ENCODE measurements at regions of chr21 and their contacts with region 1.

Region 1: DNA sequence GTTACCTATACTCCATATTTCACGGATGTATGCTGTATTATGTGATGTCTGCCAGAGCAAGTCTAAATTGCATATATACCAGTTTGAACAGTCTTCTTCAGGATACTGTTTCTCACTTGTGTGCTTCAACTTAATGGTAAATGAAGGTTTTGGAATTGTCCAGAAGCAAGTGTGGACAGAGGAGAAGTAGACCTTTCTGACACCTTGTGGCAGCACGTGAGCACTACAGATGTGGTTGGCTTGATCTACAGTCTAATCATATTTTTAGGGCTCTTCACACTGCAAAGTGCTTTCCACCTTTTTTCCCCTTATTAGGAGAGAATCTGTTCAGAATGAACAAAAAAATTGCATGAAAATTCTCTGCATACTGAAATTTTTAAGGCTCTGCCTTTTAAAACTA is 10.9 kb downstream of the MORC3 start:
- DNase-seq: no peak
- ATAC-seq: peak; percentile 91
- H3K4me3 Mint-ChIP-seq: no peak overlapping the region
- H3K27ac Mint-ChIP-seq: peak overlapping the region; percentile 79
- H3K4me1 Mint-ChIP-seq: peaks cover 36% of the 10 kb centered on the region
- H3K27me3 Mint-ChIP-seq: no peaks in the 10 kb centered on the region
- CTCF ChIP-seq: peak; percentile 67

Region 2: GRCh38 chr21:36141513-36141925 is 189.4 kb before region 1 on chr21:
- CTCF ChIA-PET with region 1: interaction called, 14 read pairs
- POLR2A ChIA-PET with region 1: no interaction called
- intact Hi-C with region 1: loop called (anchors 1 kb)
- DNase-seq: peak; percentile 49
- ATAC-seq: peak; percentile 88
- H3K4me3 Mint-ChIP-seq: no peak overlapping the region
- H3K27ac Mint-ChIP-seq: no peak overlapping the region
- H3K4me1 Mint-ChIP-seq: peaks cover 23% of the 10 kb centered on the region
- H3K27me3 Mint-ChIP-seq: no peaks in the 10 kb centered on the region
- CTCF ChIP-seq: peak; percentile 74

Region 3: GRCh38 chr21:36235058-36235582 is 95.8 kb before region 1 on chr21:
- CTCF ChIA-PET with region 1: interaction called, 5 read pairs
- POLR2A ChIA-PET with region 1: no interaction called
- intact Hi-C with region 1: loop called (anchors 1 kb)
- DNase-seq: no peak
- ATAC-seq: no peak
- H3K4me3 Mint-ChIP-seq: no peak overlapping the region
- H3K27ac Mint-ChIP-seq: no peak overlapping the region
- H3K4me1 Mint-ChIP-seq: peaks cover 33% of the 10 kb centered on the region
- H3K27me3 Mint-ChIP-seq: no peaks in the 10 kb centered on the region
- CTCF ChIP-seq: no peak

Region 4: DNA sequence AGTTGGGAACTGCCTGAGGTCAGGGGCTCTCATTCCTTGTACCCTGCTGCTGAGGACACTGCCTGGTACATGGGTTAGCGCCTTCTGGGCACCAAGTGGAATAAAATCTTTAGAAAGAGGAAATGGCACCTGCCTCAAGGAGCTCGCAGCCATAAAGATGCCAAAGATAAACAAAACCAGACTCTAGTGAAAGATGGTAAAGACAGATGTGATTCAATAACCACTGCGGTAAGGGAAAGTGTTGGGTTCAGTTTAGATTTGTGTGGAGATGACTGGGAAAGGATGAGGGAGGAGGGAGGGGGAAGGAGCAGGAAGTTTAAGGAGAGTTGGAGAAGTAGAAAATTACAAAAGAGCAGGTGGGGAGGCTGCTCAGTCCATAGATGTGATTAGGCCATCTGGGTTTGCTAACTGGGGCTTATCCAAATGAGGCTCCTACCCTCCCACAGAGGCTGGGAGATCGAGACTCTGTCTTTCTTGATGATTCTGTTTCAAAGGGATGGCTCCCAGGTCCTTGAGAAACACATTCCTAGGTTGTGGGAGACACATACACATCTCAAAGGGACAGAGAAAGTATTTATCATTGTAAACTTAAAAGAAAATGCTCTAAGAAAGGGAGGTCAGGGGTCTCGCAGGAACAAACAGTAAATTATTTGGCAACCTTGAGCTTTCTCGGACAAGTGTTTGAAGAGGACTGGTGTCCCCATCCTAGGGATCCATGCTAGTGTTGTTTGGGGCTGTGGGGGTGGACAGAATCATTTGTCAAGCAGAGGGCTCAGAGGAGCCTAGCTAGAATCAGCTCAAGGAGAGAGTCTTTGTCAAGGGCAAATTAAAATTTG is 76.6 kb before region 1 on chr21:
- CTCF ChIA-PET with region 1: interaction called, 7 read pairs
- POLR2A ChIA-PET with region 1: interaction called, 3 read pairs
- intact Hi-C with region 1: loop called (anchors 1 kb)
- DNase-seq: no peak
- ATAC-seq: peak; percentile 46
- H3K4me3 Mint-ChIP-seq: peak overlapping the region; percentile 84
- H3K27ac Mint-ChIP-seq: peak overlapping the region; percentile 88
- H3K4me1 Mint-ChIP-seq: peaks cover 69% of the 10 kb centered on the region
- H3K27me3 Mint-ChIP-seq: no peaks in the 10 kb centered on the region
- CTCF ChIP-seq: no peak

Region 5: GRCh38 chr21:36288651-36289243 is 42.2 kb before region 1 on chr21:
- CTCF ChIA-PET with region 1: interaction called, 4 read pairs
- POLR2A ChIA-PET with region 1: no interaction called
- intact Hi-C with region 1: loop called (anchors 2 kb)
- DNase-seq: no peak
- ATAC-seq: peak; percentile 51
- H3K4me3 Mint-ChIP-seq: peak overlapping the region; percentile 62
- H3K27ac Mint-ChIP-seq: peak overlapping the region; percentile 91
- H3K4me1 Mint-ChIP-seq: peaks cover 21% of the 10 kb centered on the region
- H3K27me3 Mint-ChIP-seq: no peaks in the 10 kb centered on the region
- CTCF ChIP-seq: no peak

Region 6: GRCh38 chr21:36297921-36298594 is 32.8 kb before region 1 on chr21:
- CTCF ChIA-PET with region 1: interaction called, 5 read pairs
- POLR2A ChIA-PET with region 1: interaction called, 7 read pairs
- intact Hi-C with region 1: loop called (anchors 1 kb)
- DNase-seq: peak; percentile 46
- ATAC-seq: peak; percentile 95
- H3K4me3 Mint-ChIP-seq: peak overlapping the region; percentile 78
- H3K27ac Mint-ChIP-seq: peak overlapping the region; percentile 98
- H3K4me1 Mint-ChIP-seq: peaks cover 61% of the 10 kb centered on the region
- H3K27me3 Mint-ChIP-seq: no peaks in the 10 kb centered on the region
- CTCF ChIP-seq: no peak

Region 7: GRCh38 chr21:36319765-36320420 is 11.0 kb before region 1 on chr21 and contains the start of gene MORC3:
- CTCF ChIA-PET with region 1: interaction called, 6 read pairs
- POLR2A ChIA-PET with region 1: interaction called, 14 read pairs
- intact Hi-C with region 1: no loop called
- DNase-seq: peak; percentile 98
- ATAC-seq: peak; percentile 88
- H3K4me3 Mint-ChIP-seq: peak within 1 kb of the TSS; percentile 97
- H3K27ac Mint-ChIP-seq: peak within 1 kb of the TSS; percentile 97
- H3K4me1 Mint-ChIP-seq: peaks cover 50% of the 10 kb centered on the region
- H3K27me3 Mint-ChIP-seq: no peaks in the 10 kb centered on the region
- CTCF ChIP-seq: no peak
- total RNA-seq, gene MORC3: 55.4 and 65.6 TPM in 2 replicates

Measured in activated B cell treated with CpG ODN at 0.5 μM for 24 hours (primary cell).